ENCODE measurements at regions of chr6 and their contacts with region 1.

Region 1: GRCh38 chr6:153994004-153994403 is 45.0 kb upstream of the OPRM1 start:
- DNase-seq: no peak
- H3K4me3 ChIP-seq: no peak overlapping the region
- H3K4me3 Mint-ChIP-seq: no peak overlapping the region
- H3K27ac Mint-ChIP-seq: no peak overlapping the region
- H3K4me1 ChIP-seq: peaks cover 5% of the 10 kb centered on the region
- H3K4me1 Mint-ChIP-seq: peaks cover 12% of the 10 kb centered on the region
- H3K27me3 ChIP-seq: no peaks in the 10 kb centered on the region
- H3K27me3 Mint-ChIP-seq: peaks cover 3% of the 10 kb centered on the region
- CTCF ChIP-seq: no peak

Region 2: DNA sequence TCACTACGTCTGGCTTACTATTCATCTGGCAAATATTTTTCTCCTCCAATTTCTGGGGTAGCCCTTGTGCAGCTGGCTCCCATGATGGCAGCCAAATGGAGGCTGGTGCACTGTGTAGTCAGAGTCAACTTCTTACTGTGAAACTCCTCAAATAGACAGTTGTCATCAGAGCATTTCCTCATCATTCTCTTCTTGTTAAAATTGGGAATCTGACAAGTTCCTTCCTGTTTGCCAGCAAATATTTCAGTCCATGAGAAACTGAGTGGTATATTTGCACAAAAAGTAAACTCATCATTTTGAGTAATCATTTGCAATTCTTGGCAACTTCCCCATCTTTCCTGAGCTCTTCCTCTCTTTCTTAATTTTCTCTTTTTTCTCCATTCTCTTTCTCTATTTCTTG is 468.0 kb before region 1 on chr6:
- CTCF ChIA-PET with region 1: no interaction called
- POLR2A ChIA-PET with region 1: no interaction called
- intact Hi-C with region 1: no loop called
- DNase-seq: no peak
- H3K4me3 ChIP-seq: no peak overlapping the region
- H3K4me3 Mint-ChIP-seq: no peak overlapping the region
- H3K27ac Mint-ChIP-seq: no peak overlapping the region
- H3K4me1 ChIP-seq: no peaks in the 10 kb centered on the region
- H3K4me1 Mint-ChIP-seq: no peaks in the 10 kb centered on the region
- H3K27me3 ChIP-seq: no peaks in the 10 kb centered on the region
- H3K27me3 Mint-ChIP-seq: peaks cover 8% of the 10 kb centered on the region
- CTCF ChIP-seq: no peak

Region 3: DNA sequence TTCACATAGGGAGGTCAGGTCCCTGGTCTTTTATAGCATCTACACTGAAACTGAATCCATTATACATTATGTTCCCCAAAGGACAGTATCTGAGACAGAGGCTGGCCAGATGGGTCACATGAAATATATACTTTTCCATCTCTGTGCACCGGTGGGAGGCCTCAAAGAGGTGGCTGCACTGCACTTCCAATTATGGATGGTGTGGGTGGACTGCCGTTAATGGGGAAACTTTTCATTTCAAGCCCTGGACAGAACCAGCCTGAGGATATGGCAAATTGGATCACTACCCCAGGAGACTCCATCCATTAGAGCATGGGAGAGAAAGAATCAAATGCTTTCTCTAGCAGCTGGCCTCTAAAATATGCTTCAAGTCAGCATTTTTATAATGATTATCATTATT is 235.5 kb before region 1 on chr6:
- CTCF ChIA-PET with region 1: no interaction called
- POLR2A ChIA-PET with region 1: no interaction called
- intact Hi-C with region 1: no loop called
- DNase-seq: no peak
- H3K4me3 ChIP-seq: no peak overlapping the region
- H3K4me3 Mint-ChIP-seq: no peak overlapping the region
- H3K27ac Mint-ChIP-seq: no peak overlapping the region
- H3K4me1 ChIP-seq: no peaks in the 10 kb centered on the region
- H3K4me1 Mint-ChIP-seq: no peaks in the 10 kb centered on the region
- H3K27me3 ChIP-seq: no peaks in the 10 kb centered on the region; the same call in 1 of the 2 replicates
- H3K27me3 Mint-ChIP-seq: no peaks in the 10 kb centered on the region
- CTCF ChIP-seq: no peak

Region 4: GRCh38 chr6:153957394-153957793 is 36.6 kb before region 1 on chr6:
- CTCF ChIA-PET with region 1: no interaction called
- POLR2A ChIA-PET with region 1: no interaction called
- intact Hi-C with region 1: no loop called
- DNase-seq: no peak
- H3K4me3 ChIP-seq: no peak overlapping the region
- H3K4me3 Mint-ChIP-seq: no peak overlapping the region
- H3K27ac Mint-ChIP-seq: no peak overlapping the region
- H3K4me1 ChIP-seq: no peaks in the 10 kb centered on the region
- H3K4me1 Mint-ChIP-seq: peaks cover 6% of the 10 kb centered on the region
- H3K27me3 ChIP-seq: no peaks in the 10 kb centered on the region
- H3K27me3 Mint-ChIP-seq: peaks cover 3% of the 10 kb centered on the region
- CTCF ChIP-seq: no peak

Region 5: GRCh38 chr6:153976921-153977693 is 16.9 kb before region 1 on chr6:
- CTCF ChIA-PET with region 1: no interaction called
- POLR2A ChIA-PET with region 1: no interaction called
- intact Hi-C with region 1: loop called (anchors 1 kb)
- DNase-seq: no peak
- H3K4me3 ChIP-seq: no peak overlapping the region
- H3K4me3 Mint-ChIP-seq: no peak overlapping the region
- H3K27ac Mint-ChIP-seq: no peak overlapping the region
- H3K4me1 ChIP-seq: no peaks in the 10 kb centered on the region
- H3K4me1 Mint-ChIP-seq: peaks cover 10% of the 10 kb centered on the region
- H3K27me3 ChIP-seq: no peaks in the 10 kb centered on the region
- H3K27me3 Mint-ChIP-seq: no peaks in the 10 kb centered on the region
- CTCF ChIP-seq: no peak